Ovary (tissue), 10 donors: ENCODE measurements at regions of chr4 and their contacts with region 1.

Region 1: DNA sequence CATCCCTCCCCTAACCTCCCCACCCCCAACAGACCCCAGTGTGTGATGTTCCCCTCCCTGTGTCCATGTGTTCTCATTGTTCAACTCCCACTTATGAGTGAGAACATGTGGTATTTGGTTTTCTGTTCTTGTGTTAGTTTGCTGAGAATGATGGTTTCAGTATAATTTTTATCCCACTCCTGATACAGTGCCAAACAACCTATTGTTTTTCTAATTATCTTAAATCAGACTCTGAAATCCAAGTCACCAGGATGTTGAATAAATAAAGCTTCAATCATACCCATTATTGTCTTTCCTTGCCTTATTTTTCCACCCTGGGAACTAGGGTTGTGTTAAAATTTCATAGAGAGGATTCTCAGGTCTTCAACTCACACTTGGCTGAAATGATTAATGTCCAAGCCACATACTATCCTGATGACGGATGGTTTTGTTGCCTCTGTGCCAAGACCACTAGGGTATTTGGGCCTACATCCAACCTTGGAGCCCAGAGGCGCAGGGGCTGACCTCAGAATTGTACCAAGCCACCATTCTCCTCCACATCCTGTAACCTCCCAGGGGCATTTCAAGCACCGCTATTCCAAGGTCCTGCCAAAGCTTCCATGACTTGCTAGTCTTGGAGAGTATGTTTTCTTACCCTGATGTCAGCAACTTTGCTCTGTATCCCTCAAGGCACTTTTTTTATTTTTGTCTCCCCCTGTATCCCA is 332.4 kb downstream of the ARHGAP24 start:
- DNase-seq: no peak
- H3K4me3 ChIP-seq: no peak overlapping the region
- H3K27ac ChIP-seq: no peak overlapping the region
- H3K4me1 ChIP-seq: peaks cover 4% of the 10 kb centered on the region
- H3K27me3 ChIP-seq: no peaks in the 10 kb centered on the region
- CTCF ChIP-seq: no peak
- EP300 ChIP-seq: no peak
- POLR2A ChIP-seq: no peak

Region 2: DNA sequence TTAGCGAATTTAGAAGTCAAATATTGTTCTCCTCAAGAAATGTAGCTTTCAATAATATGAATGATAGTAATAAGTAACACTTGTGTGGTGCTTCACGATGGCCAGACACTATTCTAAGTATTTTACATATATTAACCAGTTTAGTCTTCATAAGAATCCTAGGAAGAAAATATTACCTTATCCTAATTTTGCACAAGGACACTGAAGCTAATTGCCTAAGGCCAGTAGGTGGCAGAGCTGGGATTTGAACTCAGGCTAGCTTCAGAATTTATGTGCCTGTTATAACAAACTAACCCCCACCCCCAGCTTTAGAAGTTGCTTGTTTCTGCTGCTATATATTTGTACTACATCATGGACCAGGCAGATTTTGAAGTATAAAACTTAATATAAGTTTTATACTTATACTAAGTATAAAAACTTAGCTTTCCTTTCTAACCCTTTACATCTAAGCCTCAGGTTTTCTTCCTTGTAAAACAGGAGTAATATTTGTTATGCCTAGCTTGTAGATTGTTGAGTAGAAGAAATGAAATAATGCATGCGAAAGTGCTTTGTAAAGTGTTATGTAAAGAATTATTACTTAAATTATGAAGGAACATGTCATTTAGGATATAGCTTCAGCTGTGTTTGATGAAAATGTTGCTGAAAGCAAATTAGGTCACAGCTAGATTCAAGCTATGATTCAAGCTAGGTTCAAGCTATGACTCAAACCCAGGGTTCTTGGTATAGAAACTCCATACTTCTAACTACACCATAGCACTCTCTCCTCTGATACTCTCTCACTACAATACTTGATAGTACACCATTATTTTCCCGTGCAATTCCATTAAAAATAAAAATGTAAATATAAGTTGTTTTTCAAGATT is 1228.6 kb before region 1 on chr4:
- intact Hi-C with region 1: no loop called
- DNase-seq: no peak
- H3K4me3 ChIP-seq: no peak overlapping the region
- H3K27ac ChIP-seq: no peak overlapping the region
- H3K4me1 ChIP-seq: peaks cover 3% of the 10 kb centered on the region
- H3K27me3 ChIP-seq: no peaks in the 10 kb centered on the region
- CTCF ChIP-seq: no peak
- EP300 ChIP-seq: no peak
- POLR2A ChIP-seq: no peak

Region 3: DNA sequence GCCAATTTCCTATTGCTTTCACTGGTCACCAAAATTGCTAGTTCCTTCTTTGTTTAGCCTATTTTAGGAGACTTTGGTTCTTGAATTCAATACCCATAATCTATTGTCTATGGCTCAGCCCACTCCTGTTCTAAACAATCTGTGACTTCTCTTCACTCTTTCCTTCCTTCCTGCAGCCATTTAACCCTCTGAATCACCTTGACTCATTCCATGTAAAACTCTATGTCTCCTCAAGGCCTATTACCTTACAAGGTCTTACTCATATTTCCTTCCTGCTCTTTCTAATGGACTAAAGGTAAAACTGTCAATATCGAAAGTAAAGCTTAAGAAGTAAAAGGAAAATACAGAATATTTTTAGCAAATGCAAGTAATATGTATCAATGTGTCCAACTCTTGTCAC is 30.8 kb before region 1 on chr4:
- intact Hi-C with region 1: loop called in 1 of 4 experiments (anchors 1 kb)
- DNase-seq: no peak
- H3K4me3 ChIP-seq: no peak overlapping the region
- H3K27ac ChIP-seq: no peak overlapping the region
- H3K4me1 ChIP-seq: peaks cover 1% of the 10 kb centered on the region
- H3K27me3 ChIP-seq: no peaks in the 10 kb centered on the region
- CTCF ChIP-seq: no peak
- EP300 ChIP-seq: no peak
- POLR2A ChIP-seq: no peak